GM10248 (cell line): ENCODE measurements at regions of chr14 and their contacts with region 1.

Region 1: GRCh38 chr14:70600382-70601157 is at the start of gene MED6:
- DNase-seq: peak; percentile 94
- CTCF ChIP-seq: no peak

Region 2: GRCh38 chr14:70567791-70568190 is 32.8 kb before region 1 on chr14:
- CTCF ChIA-PET with region 1: no interaction called
- POLR2A ChIA-PET with region 1: no interaction called
- DNase-seq: peak; percentile 35
- CTCF ChIP-seq: peak; percentile 33

Region 3: GRCh38 chr14:70585219-70585618 is 15.4 kb before region 1 on chr14:
- CTCF ChIA-PET with region 1: interaction called, 11 read pairs
- POLR2A ChIA-PET with region 1: no interaction called
- DNase-seq: no peak
- CTCF ChIP-seq: peak; percentile 34

Region 4: GRCh38 chr14:70611216-70611615 is 10.6 kb after region 1 on chr14:
- CTCF ChIA-PET with region 1: no interaction called
- POLR2A ChIA-PET with region 1: no interaction called
- DNase-seq: no peak
- CTCF ChIP-seq: no peak

Region 5: GRCh38 chr14:70635971-70636595 is 35.5 kb after region 1 on chr14:
- CTCF ChIA-PET with region 1: no interaction called
- POLR2A ChIA-PET with region 1: no interaction called
- DNase-seq: no peak
- CTCF ChIP-seq: no peak